PC-3 (cell line): ENCODE measurements at regions of chr9 and their contacts with region 1.

Region 1: DNA sequence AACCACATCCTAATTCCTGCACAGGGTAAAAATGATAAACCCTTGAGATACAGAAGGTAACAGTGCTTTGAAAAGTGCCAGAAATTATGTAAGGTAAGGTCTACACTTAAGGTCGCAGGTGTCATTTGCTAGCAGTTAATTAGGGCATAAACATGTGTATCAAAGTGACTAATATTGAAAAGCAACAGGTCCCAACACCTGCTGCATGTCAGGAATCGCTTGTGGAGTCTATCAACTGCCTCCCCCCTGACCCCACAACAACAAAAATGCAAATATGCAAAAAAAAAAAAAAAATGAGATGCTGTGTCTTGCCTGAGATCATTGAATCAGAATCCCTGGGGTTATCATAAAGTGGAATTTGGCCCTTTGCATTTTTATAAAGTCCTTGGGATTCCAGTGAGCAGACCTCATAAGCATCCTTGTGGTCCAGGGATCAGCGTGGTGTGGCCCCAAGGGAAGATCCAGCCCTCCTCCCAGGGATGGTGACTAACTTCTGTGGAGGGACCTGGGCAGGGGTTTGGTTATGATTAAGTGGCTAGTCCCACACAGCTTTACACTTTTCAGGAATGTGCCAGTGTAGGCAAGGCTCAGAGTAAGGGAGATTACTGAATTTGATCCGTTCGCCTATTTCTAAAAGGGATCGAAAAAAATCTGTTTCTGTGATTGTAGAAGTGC is 92.5 kb upstream of the TNFSF8 start:
- DNase-seq: peak; percentile 55
- ATAC-seq: no peak
- H3K4me3 ChIP-seq: no peak overlapping the region
- H3K27ac ChIP-seq: no peak overlapping the region
- H3K4me1 ChIP-seq: peaks cover 18% of the 10 kb centered on the region
- H3K27me3 ChIP-seq: no peaks in the 10 kb centered on the region
- CTCF ChIP-seq: no peak

Region 2: GRCh38 chr9:115182264-115182663 is 159.4 kb after region 1 on chr9:
- CTCF ChIA-PET with region 1: no interaction called
- POLR2A ChIA-PET with region 1: no interaction called
- intact Hi-C with region 1: loop called (anchors 10 kb)
- DNase-seq: no peak
- ATAC-seq: no peak
- H3K4me3 ChIP-seq: no peak overlapping the region
- H3K27ac ChIP-seq: no peak overlapping the region
- H3K4me1 ChIP-seq: 0 out of 2 replicates have a peak, but pooled peaks cover 5% of the 10 kb centered on the region
- H3K27me3 ChIP-seq: no peaks in the 10 kb centered on the region
- CTCF ChIP-seq: no peak